CD4-positive, alpha-beta T cell (primary cell): ENCODE measurements at regions of chr14 and their contacts with region 1.

Region 1: DNA sequence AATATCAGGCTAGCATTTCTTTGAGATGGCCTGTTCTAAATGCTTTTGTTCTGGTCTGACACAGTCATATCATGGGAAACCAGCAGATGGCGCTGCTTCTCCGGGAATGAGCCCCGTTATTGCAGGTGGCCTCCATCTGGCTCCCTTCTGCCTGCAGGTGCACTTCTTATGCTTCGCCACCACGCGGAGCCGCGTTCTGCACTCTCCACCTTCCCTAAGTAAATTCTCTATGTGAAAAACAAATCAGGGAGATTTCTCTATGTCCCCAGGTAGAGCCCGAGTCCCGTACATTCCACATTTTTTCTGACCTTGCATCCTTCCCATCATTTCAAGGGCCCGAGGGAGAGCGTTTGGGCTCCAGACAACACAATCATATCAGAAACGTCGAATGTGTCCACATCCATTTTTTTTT is 26.2 kb downstream of the GLRX5 start:
- DNase-seq: peak; percentile 73 to 90 (median 80)
- ATAC-seq: peak; percentile 99
- H3K4me3 ChIP-seq: no peak overlapping the region
- H3K4me3 Mint-ChIP-seq: no peak overlapping the region
- H3K27ac ChIP-seq: no peak overlapping the region
- H3K27ac Mint-ChIP-seq: no peak overlapping the region
- H3K4me1 ChIP-seq: peaks cover 4% of the 10 kb centered on the region
- H3K4me1 Mint-ChIP-seq: peaks cover 5% of the 10 kb centered on the region
- H3K27me3 ChIP-seq: peaks cover 0 to 4% of the 10 kb centered on the region in 2 experiments
- H3K27me3 Mint-ChIP-seq: peaks cover 14% of the 10 kb centered on the region
- CTCF ChIP-seq: peak; percentile 99

Region 2: DNA sequence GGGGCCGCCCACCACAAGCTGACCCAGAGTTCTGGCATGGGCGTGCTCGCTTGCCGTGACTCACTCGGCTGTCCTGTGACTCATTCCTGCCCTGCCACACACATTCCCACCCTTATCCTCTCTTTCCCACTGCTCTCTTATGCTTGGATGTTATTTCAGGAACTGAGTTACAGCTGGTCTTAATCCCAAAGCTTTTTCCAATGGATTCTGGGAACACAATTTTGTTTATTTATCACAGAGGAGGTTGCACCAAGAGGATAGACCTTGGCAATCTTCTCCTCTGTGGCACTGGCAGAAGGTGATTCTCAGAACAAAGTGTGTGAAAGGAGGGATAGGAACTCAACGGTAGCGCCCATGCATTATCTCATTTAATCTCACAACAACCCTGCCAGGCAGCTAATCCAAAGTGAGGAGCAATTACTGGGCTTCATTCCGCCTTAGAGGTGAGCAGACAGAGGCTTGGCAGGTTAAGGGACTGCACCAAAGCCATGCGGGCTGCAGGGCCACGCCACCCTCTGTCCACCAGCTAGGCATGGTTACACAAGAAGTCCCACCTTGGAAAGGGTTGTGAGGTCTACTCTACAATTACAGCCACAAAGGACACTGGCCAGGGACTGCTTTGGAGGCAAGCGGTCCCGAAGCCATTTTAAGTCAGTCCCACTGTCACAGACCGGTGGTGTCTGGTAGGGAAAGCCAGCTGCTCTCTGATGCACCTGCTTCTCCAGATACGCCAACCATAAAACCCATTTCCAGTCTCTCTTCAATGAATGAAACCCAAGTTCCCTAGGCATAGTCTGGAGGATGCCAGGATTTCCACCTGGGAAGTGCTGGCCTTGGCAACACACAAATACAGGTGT is 77.5 kb before region 1 on chr14:
- CTCF ChIA-PET with region 1: no interaction called
- POLR2A ChIA-PET with region 1: no interaction called
- intact Hi-C with region 1: no loop called
- DNase-seq: no peak
- ATAC-seq: no peak
- H3K4me3 ChIP-seq: no peak overlapping the region
- H3K4me3 Mint-ChIP-seq: no peak overlapping the region
- H3K27ac ChIP-seq: peak overlapping the region in 1 of 2 donors; percentile 21
- H3K27ac Mint-ChIP-seq: peak overlapping the region; percentile 66
- H3K4me1 ChIP-seq: peaks cover 52% of the 10 kb centered on the region
- H3K4me1 Mint-ChIP-seq: peaks cover 68% of the 10 kb centered on the region
- H3K27me3 ChIP-seq: no peaks in the 10 kb centered on the region
- H3K27me3 Mint-ChIP-seq: no peaks in the 10 kb centered on the region
- CTCF ChIP-seq: no peak

Region 3: DNA sequence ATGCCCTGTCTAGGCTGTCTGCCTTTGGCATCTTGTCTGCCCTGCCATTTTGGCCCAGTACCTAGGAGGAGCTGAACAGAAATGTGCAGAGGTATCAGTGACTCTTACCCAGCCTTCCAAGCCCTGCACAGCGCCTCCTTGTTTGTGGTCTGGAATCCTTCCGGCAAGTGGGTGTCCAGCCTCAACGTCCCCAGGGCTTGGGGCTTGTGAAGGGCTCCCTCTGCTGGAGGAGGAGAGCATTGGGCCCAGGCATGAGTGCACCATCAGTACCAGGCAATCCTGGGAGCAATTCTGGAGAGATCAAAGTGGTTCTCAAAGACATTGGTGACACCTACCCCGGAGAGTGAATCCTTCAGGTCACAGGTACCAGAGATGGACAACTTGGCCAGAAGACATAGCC is 122.8 kb after region 1 on chr14:
- CTCF ChIA-PET with region 1: no interaction called
- POLR2A ChIA-PET with region 1: no interaction called
- intact Hi-C with region 1: loop called (anchors 1 kb)
- DNase-seq: peak in 9 of 14 experiments; percentile 1 to 55 (median 16)
- ATAC-seq: no peak
- H3K4me3 ChIP-seq: no peak overlapping the region
- H3K4me3 Mint-ChIP-seq: no peak overlapping the region
- H3K27ac ChIP-seq: no peak overlapping the region
- H3K27ac Mint-ChIP-seq: no peak overlapping the region
- H3K4me1 ChIP-seq: no peaks in the 10 kb centered on the region
- H3K4me1 Mint-ChIP-seq: no peaks in the 10 kb centered on the region
- H3K27me3 ChIP-seq: peaks cover 0 to 3% of the 10 kb centered on the region in 2 experiments
- H3K27me3 Mint-ChIP-seq: peaks cover 31% of the 10 kb centered on the region
- CTCF ChIP-seq: peak; percentile 61

Region 4: DNA sequence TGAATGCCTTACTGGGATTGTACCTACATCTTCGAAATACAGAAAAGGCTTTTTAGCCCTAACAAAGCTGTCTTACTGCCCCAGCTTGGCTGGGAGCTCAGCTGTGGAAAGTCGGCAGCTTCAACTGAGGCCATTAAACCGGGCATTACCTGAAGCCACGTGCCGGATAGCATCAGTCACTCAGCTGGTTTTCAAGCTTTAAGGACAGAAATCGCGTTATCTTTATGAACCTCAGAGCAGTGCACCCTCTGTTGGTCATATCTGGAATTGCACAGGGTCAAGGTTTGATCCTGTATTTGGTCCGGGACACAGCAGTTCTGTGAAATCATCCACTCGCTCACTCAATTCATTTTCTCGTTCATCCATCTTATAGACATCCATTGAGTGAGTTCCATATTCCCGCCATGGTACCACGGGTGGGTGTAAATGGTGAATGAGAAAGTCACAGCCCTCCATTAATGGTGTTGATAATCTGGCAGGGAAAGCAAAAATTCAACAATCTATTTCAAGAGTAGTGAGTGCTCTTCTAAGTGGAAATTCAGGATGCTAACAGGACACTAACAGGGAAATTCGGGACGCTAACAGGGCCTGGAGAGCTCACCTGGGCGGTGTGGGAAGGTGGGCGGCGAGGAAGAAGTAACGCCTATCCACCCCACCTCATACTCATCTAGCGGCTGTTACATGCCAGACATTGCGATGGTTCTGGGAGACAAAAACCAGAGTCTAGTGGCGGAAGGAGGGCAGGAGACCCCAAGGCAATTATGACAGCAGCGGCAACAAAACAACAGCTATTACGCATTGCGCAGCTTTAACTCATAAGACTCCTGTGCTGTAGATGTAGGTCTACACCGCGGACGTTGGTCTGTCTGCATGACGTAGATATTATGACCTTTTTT is 213.5 kb after region 1 on chr14:
- CTCF ChIA-PET with region 1: no interaction called
- POLR2A ChIA-PET with region 1: no interaction called
- intact Hi-C with region 1: loop called in 1 of 2 experiments (anchors 1 kb)
- DNase-seq: peak in 13 of 14 experiments; percentile 27 to 69 (median 37)
- ATAC-seq: no peak
- H3K4me3 ChIP-seq: no peak overlapping the region
- H3K4me3 Mint-ChIP-seq: no peak overlapping the region
- H3K27ac ChIP-seq: no peak overlapping the region
- H3K27ac Mint-ChIP-seq: no peak overlapping the region
- H3K4me1 ChIP-seq: no peaks in the 10 kb centered on the region
- H3K4me1 Mint-ChIP-seq: peaks cover 5% of the 10 kb centered on the region
- H3K27me3 ChIP-seq: peaks cover 0 to 10% of the 10 kb centered on the region in 2 experiments
- H3K27me3 Mint-ChIP-seq: peaks cover 19% of the 10 kb centered on the region
- CTCF ChIP-seq: peak; percentile 93

Region 5: DNA sequence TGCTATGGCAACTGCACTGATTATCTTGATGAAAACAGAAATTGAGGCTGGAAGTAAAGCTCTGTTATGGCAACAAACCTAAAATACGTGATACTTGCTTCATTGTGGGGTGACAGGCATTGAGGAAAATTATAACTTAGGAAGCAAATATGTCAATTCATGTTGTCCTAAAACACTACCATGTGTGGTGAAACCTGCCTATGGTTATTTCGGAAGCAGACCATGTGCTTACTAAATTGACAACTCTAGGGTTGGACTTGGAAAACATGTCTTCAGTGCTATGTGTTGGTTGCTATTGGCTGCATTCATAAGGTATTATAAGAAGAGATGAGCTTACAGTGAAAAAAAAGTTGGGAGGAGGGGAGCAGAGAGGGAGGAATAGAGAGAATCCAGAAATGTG is 423.2 kb after region 1 on chr14:
- CTCF ChIA-PET with region 1: no interaction called
- POLR2A ChIA-PET with region 1: no interaction called
- intact Hi-C with region 1: no loop called
- DNase-seq: no peak
- ATAC-seq: no peak
- H3K4me3 ChIP-seq: no peak overlapping the region
- H3K4me3 Mint-ChIP-seq: no peak overlapping the region
- H3K27ac ChIP-seq: no peak overlapping the region
- H3K27ac Mint-ChIP-seq: no peak overlapping the region
- H3K4me1 ChIP-seq: no peaks in the 10 kb centered on the region
- H3K4me1 Mint-ChIP-seq: no peaks in the 10 kb centered on the region
- H3K27me3 ChIP-seq: peaks cover 19 to 27% of the 10 kb centered on the region in 2 experiments
- H3K27me3 Mint-ChIP-seq: peaks cover 47% of the 10 kb centered on the region
- CTCF ChIP-seq: no peak

Region 6: DNA sequence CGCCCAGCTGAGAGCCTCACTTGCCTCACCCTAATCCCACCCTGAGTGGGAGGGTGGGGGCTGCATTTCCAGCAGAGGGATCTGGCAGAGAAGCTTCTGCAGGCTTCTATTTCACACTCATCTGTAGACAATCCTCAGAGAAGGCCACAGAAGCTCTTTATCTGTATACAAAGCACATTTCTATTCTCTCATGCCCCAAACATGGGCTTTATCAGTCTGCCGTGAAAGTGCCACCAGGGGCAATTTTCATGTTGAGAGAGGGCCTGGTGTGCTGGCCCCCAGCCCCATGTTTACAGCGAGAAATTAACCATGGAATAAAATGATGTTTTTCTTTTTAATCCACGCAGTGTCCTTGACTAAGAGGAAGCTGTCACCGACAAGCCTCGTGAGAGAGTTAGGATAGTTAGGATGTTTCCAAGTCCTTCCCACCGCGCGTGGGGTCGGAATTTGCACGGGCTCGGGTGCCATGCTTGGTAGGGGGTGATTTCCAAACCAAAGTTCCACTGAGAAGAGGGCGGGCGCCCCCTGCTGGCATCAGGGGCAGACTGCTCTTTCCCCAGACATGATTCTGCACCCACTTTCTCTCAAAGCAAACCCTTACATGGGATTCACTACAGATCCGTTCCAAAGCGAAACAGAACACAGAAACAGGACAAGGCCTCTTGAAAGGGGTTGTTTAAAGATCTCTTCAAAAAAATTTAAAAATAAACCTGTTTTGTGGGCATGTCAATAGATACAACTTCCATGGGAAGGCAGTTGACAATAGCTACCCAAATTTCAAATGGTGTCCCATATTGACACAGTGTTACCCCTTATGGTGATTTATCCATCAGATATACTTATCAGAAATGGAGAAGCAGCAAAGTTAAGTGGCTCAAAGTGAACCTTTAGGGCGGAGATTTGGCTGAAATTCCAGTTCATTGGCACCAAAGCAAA is 714.4 kb after region 1 on chr14:
- CTCF ChIA-PET with region 1: interaction called, 4 read pairs
- POLR2A ChIA-PET with region 1: no interaction called
- intact Hi-C with region 1: loop called in 1 of 2 experiments (anchors 10 kb)
- DNase-seq: peak; percentile 47 to 84 (median 66)
- ATAC-seq: no peak
- H3K4me3 ChIP-seq: no peak overlapping the region
- H3K4me3 Mint-ChIP-seq: no peak overlapping the region
- H3K27ac ChIP-seq: no peak overlapping the region
- H3K27ac Mint-ChIP-seq: no peak overlapping the region
- H3K4me1 ChIP-seq: peaks cover 3% of the 10 kb centered on the region
- H3K4me1 Mint-ChIP-seq: no peaks in the 10 kb centered on the region
- H3K27me3 ChIP-seq: no peaks in the 10 kb centered on the region
- H3K27me3 Mint-ChIP-seq: no peaks in the 10 kb centered on the region
- CTCF ChIP-seq: peak; percentile 83

Region 7: DNA sequence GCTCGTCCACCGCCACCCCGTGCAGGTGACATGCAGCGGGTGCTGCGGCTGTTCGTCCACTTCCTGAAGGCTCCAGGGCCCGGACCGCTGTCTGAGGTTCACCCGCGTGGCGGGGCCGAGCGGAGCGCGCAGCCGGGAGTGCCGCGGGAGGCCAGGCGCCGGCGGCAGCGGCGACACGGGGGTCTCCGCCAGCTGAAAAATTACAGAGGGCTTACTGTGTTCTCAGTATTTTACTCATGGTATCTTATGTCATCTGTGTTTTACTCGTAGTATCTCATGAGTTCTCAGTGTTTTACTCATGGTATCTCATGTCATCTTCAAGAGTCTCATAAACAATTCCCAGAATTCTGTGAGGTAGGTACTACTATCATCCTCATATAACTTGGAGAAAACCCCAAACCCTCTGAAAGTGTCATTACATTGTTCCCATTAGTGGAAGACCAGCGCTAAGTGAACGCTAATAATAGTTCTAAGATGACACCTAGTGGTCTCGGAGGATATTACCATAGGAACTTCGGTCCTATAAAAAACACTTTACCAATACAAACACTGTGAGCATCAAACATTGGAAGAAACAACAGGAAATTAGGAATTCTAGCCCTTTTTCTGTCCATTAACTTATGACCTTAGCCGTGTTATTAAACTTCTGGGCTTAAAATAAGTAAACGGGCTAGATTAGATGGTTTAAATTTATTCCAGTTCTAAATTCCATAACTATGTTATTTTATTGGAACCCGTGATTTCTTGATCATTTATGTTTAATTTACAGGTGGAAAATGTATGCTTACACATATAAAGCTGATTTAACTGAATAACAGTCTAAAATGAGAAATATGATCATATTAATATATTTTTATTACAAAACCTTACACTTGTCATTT is 863.3 kb after region 1 on chr14:
- CTCF ChIA-PET with region 1: no interaction called
- POLR2A ChIA-PET with region 1: no interaction called
- intact Hi-C with region 1: loop called in 1 of 2 experiments (anchors 10 kb)
- DNase-seq: peak in 7 of 14 experiments; percentile 1 to 78 (median 37)
- ATAC-seq: peak; percentile 78
- H3K4me3 ChIP-seq: peak overlapping the region; percentile 42
- H3K4me3 Mint-ChIP-seq: peak overlapping the region; percentile 77
- H3K27ac ChIP-seq: no peak overlapping the region
- H3K27ac Mint-ChIP-seq: no peak overlapping the region
- H3K4me1 ChIP-seq: peaks cover 8% of the 10 kb centered on the region
- H3K4me1 Mint-ChIP-seq: no peaks in the 10 kb centered on the region
- H3K27me3 ChIP-seq: no peaks in the 10 kb centered on the region
- H3K27me3 Mint-ChIP-seq: peaks cover 12% of the 10 kb centered on the region
- CTCF ChIP-seq: peak; percentile 92